ENCODE measurements at regions of chr12 and their contacts with region 1.

Region 1: DNA sequence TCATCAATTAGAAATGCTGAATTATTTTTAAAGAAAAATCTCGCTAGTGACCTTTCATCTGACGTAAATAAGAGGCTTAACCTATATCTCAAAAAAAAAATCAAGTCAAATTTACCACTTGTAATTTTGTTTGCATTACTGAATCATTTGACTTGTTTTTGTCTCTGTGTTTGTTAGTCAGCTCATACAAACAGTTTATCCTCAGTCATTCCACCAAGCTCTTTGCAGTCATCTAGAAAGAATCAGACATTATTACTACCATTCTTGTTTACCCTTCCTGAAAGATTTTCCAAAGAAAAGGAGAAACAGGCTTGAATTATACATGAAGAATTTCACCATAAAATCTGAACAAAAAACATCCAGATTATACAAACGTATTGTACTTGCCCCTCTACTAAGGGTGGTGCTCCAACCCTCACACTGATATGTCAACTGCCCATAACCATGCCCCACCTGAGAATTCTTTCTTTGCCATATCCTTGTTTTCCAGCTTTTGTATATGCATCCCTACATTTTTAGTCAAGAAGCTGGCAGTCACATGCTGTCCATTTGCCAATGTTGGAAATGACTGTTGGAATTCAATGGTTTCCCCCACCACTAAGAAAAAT is 257.2 kb downstream of the PAWR start:
- DNase-seq: no peak
- ATAC-seq: peak; percentile 14; the same call in 1 of the 2 replicates
- H3K4me3 ChIP-seq: no peak overlapping the region
- H3K27ac ChIP-seq: no peak overlapping the region
- H3K4me1 ChIP-seq: peaks cover 2% of the 10 kb centered on the region; the same call in 1 of the 2 replicates
- H3K27me3 ChIP-seq: no peaks in the 10 kb centered on the region
- CTCF ChIP-seq: no peak
- POLR2A ChIP-seq: no peak
- RAD21 ChIP-seq: no peak

Region 2: DNA sequence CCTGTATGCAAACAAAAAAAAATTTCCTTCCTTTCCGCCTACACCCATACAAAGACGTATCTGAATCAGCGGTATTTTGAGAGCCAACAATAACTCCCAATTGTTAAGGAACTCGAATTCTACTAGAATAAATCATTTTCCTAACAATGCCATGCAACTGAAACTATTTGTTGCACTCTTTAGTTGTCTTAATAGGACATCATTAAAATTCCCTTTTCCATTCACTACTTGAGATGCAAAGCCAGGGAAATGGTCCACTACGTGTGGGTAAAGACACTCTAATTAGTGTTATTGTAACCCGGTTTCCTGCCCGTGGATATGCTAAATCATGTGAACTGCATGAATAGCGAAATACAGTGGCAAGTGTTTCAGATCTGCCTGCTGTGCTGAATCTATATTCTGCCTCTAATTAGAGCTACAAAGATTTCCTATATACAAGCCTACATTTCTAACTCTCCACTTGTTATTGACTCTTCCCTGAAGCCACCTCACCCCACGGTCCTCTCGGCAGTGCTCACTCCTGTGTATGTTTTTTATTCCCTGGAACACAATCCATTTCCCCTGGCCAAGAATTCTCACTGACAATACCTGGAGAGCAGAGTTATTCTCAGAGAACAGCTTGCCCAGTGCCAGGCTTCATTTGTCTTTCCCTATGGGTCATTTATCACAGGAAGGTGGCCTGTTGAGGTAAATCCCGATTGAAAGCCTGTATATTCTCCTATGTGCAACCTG is 88.9 kb after region 1 on chr12:
- CTCF ChIA-PET with region 1: no interaction called
- POLR2A ChIA-PET with region 1: no interaction called
- dilution Hi-C with region 1: no loop called
- in situ Hi-C with region 1: no loop called
- intact Hi-C with region 1: loop called (anchors 5 kb)
- DNase-seq: no peak
- ATAC-seq: no peak
- H3K4me3 ChIP-seq: no peak overlapping the region
- H3K27ac ChIP-seq: no peak overlapping the region
- H3K4me1 ChIP-seq: peaks cover 3% of the 10 kb centered on the region; the same call in 1 of the 2 replicates
- H3K27me3 ChIP-seq: no peaks in the 10 kb centered on the region
- CTCF ChIP-seq: no peak
- POLR2A ChIP-seq: no peak
- RAD21 ChIP-seq: no peak